CD8-positive, alpha-beta memory T cell (primary cell): ENCODE measurements at regions of chr1 and their contacts with region 1.

Region 1: GRCh38 chr1:235783148-235783776 is 83.4 kb downstream of the LYST start:
- DNase-seq: peak in 2 of 5 donors; percentile 3 to 7
- H3K4me3 ChIP-seq: no peak overlapping the region
- H3K4me3 Mint-ChIP-seq: no peak overlapping the region
- H3K27ac ChIP-seq: no peak overlapping the region
- H3K27ac Mint-ChIP-seq: peak overlapping the region in 1 of 8 donors; percentile 61
- H3K4me1 ChIP-seq: no peaks in the 10 kb centered on the region
- H3K4me1 Mint-ChIP-seq: no peaks in the 10 kb centered on the region
- H3K27me3 ChIP-seq: no peaks in the 10 kb centered on the region
- H3K27me3 Mint-ChIP-seq: no peaks in the 10 kb centered on the region

Region 2: DNA sequence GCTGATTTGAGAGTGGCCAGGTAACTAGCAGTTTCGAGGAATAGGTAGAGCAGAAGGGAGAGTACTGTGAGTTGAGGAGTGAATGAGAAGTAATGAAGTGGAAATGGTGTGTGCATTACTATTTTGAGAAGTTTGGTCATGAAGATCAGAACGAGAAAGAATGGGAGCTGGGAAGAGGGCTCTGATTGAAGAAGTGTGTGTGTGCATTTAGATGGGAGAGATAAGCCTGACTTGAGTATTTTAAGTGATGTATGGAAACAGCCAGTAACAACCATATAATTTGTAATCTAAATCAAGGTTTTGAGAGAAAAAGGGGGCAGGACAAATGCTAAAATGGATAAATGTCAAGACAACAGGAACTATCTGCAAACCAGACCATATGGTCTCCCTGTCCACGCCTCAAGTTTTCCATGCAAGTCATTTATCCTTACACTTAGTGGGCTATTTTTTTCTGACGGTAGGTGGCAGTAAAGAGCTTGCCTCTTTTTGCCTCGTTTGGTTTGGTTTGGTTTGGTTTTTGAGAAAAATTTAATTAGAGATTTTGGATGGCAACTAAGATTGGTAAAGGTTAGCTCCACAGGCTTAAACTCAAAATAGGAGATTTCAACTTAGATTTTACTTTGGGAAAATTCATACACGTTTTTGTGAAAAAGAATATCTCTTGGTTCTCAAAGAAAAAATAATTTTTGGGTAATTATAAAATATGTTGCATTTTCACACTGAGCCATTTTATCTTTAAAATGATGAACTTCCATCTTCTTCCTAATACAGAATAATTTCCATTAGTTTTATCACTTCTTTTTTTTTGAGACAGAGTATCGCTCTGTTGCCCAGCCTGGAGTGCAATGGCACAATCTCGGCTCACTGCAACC is 269.5 kb before region 1 on chr1:
- CTCF ChIA-PET with region 1: interaction called, 13 read pairs
- POLR2A ChIA-PET with region 1: no interaction called
- DNase-seq: peak in 4 of 5 donors; percentile 19 to 53 (median 48)
- H3K4me3 ChIP-seq: no peak overlapping the region
- H3K4me3 Mint-ChIP-seq: no peak overlapping the region
- H3K27ac ChIP-seq: no peak overlapping the region
- H3K27ac Mint-ChIP-seq: no peak overlapping the region
- H3K4me1 ChIP-seq: no peaks in the 10 kb centered on the region
- H3K4me1 Mint-ChIP-seq: no peaks in the 10 kb centered on the region
- H3K27me3 ChIP-seq: no peaks in the 10 kb centered on the region
- H3K27me3 Mint-ChIP-seq: peaks cover 9 to 11% of the 10 kb centered on the region in 2 donors

Region 3: DNA sequence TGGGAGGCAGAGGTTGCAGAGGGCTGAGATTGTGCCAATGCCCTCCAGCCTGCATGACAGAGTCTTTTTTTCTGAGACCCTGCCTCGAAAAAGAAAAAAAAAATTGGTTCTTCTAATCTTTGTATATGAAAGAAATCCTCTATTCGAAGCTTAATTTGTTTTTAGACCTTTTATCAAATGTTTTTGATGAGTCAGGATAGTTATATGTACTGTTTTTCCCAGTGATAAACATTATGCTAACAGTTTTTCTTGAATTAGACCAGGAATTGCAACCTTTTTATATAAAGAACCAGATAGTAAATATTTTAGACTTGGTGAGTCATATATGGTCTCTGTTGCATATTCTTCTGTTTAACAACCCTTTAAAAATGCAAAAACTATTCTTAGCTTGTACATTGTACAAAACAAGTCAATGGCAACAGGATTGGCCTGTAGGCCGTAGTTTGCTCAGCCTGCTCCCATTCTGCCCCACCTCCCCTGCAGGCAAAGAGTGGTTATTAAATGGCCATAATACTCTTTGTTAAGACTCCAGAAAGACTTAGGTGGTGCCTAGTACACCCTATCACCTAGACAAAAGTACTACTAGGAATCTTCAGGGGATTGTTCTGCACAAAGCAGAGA is 38.2 kb after region 1 on chr1:
- CTCF ChIA-PET with region 1: no interaction called
- POLR2A ChIA-PET with region 1: no interaction called
- DNase-seq: no peak
- H3K4me3 ChIP-seq: no peak overlapping the region
- H3K4me3 Mint-ChIP-seq: no peak overlapping the region
- H3K27ac ChIP-seq: no peak overlapping the region
- H3K27ac Mint-ChIP-seq: peak overlapping the region in 2 of 8 donors; percentile 48 to 79
- H3K4me1 ChIP-seq: no peaks in the 10 kb centered on the region
- H3K4me1 Mint-ChIP-seq: peaks cover 27 to 42% (median 30%) of the 10 kb centered on the region in 3 donors
- H3K27me3 ChIP-seq: no peaks in the 10 kb centered on the region
- H3K27me3 Mint-ChIP-seq: no peaks in the 10 kb centered on the region